Activated CD4-positive, alpha-beta memory T cell treated with anti-CD3 and anti-CD28 coated beads, Interleukin-2, amount 10 ng/mL, durations not matched to agents 7 days and 5 days (primary cell): ENCODE measurements at regions of chr10 and their contacts with region 1.

Region 1: GRCh38 chr10:6542999-6543430 is 37.1 kb downstream of the PRKCQ start:
- DNase-seq: peak; percentile 66
- H3K4me3 Mint-ChIP-seq: peak overlapping the region; percentile 86
- H3K27ac Mint-ChIP-seq: peak overlapping the region; percentile 100
- H3K4me1 Mint-ChIP-seq: peaks cover 73% of the 10 kb centered on the region
- H3K27me3 Mint-ChIP-seq: no peaks in the 10 kb centered on the region

Region 2: GRCh38 chr10:6445501-6446316 is 97.3 kb before region 1 on chr10:
- CTCF ChIA-PET with region 1: interaction called, 10 read pairs
- POLR2A ChIA-PET with region 1: interaction called, 4 read pairs
- DNase-seq: peak; percentile 78
- H3K4me3 Mint-ChIP-seq: no peak overlapping the region
- H3K27ac Mint-ChIP-seq: peak overlapping the region; percentile 3
- H3K4me1 Mint-ChIP-seq: peaks cover 47% of the 10 kb centered on the region
- H3K27me3 Mint-ChIP-seq: no peaks in the 10 kb centered on the region

Region 3: GRCh38 chr10:6473901-6474370 is 69.1 kb before region 1 on chr10:
- CTCF ChIA-PET with region 1: interaction called, 8 read pairs
- POLR2A ChIA-PET with region 1: interaction called, 22 read pairs
- DNase-seq: peak; percentile 38
- H3K4me3 Mint-ChIP-seq: peak overlapping the region; percentile 86
- H3K27ac Mint-ChIP-seq: peak overlapping the region; percentile 96
- H3K4me1 Mint-ChIP-seq: peaks cover 66% of the 10 kb centered on the region
- H3K27me3 Mint-ChIP-seq: no peaks in the 10 kb centered on the region

Region 4: DNA sequence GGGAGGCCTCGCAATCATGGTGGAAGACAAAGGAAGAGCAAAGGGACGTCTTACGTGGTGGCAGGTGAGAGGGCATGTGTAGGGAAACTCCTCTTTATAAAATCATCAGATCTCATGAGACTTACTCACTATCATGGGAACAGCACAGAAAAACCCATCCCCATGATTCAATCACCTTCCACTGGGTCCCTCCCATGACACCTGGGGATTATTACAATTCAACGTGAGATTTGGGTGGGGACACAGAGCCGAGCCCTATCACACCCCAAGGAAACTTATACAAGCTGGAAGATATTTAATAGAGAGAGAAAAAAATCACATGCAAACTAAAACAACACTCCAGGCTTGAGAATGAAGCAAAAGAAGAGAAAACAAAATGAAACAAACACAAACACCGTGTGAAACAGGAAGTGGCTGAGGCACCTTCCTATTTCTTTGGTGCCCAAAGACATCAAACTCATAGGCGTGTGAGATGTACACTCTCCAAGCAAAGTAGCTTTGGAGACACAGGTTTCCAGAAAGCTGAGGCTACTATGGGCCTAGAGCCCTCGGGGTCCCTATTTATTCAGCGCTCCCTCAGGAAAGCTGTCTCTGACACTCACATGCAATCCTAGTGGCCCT is 60.2 kb before region 1 on chr10:
- CTCF ChIA-PET with region 1: interaction called, 4 read pairs
- POLR2A ChIA-PET with region 1: interaction called, 10 read pairs
- DNase-seq: peak; percentile 28
- H3K4me3 Mint-ChIP-seq: no peak overlapping the region
- H3K27ac Mint-ChIP-seq: peak overlapping the region; percentile 72
- H3K4me1 Mint-ChIP-seq: peaks cover 62% of the 10 kb centered on the region
- H3K27me3 Mint-ChIP-seq: no peaks in the 10 kb centered on the region

Region 5: DNA sequence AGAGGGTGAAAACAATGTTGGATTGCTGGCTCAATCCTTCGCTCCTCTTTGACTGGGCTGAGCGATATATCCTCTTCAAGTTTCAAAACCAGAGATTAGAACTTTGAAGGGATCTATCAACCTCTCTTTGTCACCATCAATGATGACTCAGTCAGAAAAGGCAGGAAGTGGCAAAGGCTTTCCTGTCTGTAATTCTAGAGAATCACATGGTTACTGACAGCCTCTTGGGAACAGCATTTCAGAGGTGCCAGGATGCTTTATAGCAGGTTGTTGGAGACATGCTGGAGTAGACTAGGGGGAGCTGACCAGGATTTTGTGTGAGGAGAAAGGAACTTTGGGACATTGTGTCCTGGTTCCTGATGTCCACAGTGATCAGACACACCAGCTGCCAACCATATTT is 44.2 kb before region 1 on chr10:
- CTCF ChIA-PET with region 1: no interaction called
- POLR2A ChIA-PET with region 1: interaction called, 54 read pairs
- DNase-seq: peak; percentile 58
- H3K4me3 Mint-ChIP-seq: peak overlapping the region; percentile 55
- H3K27ac Mint-ChIP-seq: peak overlapping the region; percentile 91
- H3K4me1 Mint-ChIP-seq: peaks cover 32% of the 10 kb centered on the region
- H3K27me3 Mint-ChIP-seq: no peaks in the 10 kb centered on the region

Region 6: DNA sequence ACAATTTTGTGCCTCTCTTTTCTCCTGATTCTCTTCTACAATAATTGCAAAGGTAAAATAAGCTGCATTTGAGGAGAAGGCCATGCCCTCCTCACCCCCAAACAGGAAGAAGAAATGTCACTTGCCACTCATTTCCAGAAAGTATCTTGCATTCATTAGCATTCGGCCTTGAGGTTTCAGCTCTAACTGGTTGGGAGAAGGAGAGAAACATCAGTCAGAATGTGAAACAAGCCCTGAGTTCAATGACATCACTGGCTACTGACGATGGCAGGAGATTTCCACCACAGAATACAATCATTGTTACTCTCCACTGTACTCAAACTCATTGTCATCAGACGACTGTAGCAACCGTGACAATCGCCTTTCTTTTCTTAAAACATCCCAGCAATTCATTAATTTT is 35.7 kb before region 1 on chr10:
- CTCF ChIA-PET with region 1: no interaction called
- POLR2A ChIA-PET with region 1: interaction called, 12 read pairs
- DNase-seq: peak; percentile 58
- H3K4me3 Mint-ChIP-seq: peak overlapping the region; percentile 40
- H3K27ac Mint-ChIP-seq: peak overlapping the region; percentile 88
- H3K4me1 Mint-ChIP-seq: peaks cover 72% of the 10 kb centered on the region
- H3K27me3 Mint-ChIP-seq: no peaks in the 10 kb centered on the region

Region 7: GRCh38 chr10:6563075-6563474 is 20.1 kb after region 1 on chr10:
- CTCF ChIA-PET with region 1: interaction called, 25 read pairs
- POLR2A ChIA-PET with region 1: interaction called, 91 read pairs
- DNase-seq: peak; percentile 70
- H3K4me3 Mint-ChIP-seq: peak overlapping the region; percentile 71
- H3K27ac Mint-ChIP-seq: peak overlapping the region; percentile 92
- H3K4me1 Mint-ChIP-seq: peaks cover 90% of the 10 kb centered on the region
- H3K27me3 Mint-ChIP-seq: no peaks in the 10 kb centered on the region